PC-3 (cell line): ENCODE measurements at regions of chr7 and their contacts with region 1.

Region 1: GRCh38 chr7:6323967-6324701 is 51.7 kb upstream of the CYTH3 start:
- DNase-seq: no peak
- ATAC-seq: no peak
- H3K4me3 ChIP-seq: no peak overlapping the region
- H3K27ac ChIP-seq: no peak overlapping the region
- H3K4me1 ChIP-seq: no peaks in the 10 kb centered on the region
- H3K27me3 ChIP-seq: no peaks in the 10 kb centered on the region
- CTCF ChIP-seq: no peak

Region 2: GRCh38 chr7:5997222-5997808 is 326.8 kb before region 1 on chr7:
- CTCF ChIA-PET with region 1: no interaction called
- POLR2A ChIA-PET with region 1: no interaction called
- intact Hi-C with region 1: loop called (anchors 1 kb)
- DNase-seq: peak; percentile 72
- ATAC-seq: peak; percentile 69
- H3K4me3 ChIP-seq: no peak overlapping the region
- H3K27ac ChIP-seq: no peak overlapping the region
- H3K4me1 ChIP-seq: peaks cover 13% of the 10 kb centered on the region
- H3K27me3 ChIP-seq: no peaks in the 10 kb centered on the region
- CTCF ChIP-seq: peak; percentile 81

Region 3: GRCh38 chr7:6160191-6160623 is 163.9 kb before region 1 on chr7:
- CTCF ChIA-PET with region 1: interaction called, 6 read pairs
- POLR2A ChIA-PET with region 1: no interaction called
- intact Hi-C with region 1: loop called (anchors 1 kb)
- DNase-seq: peak; percentile 42
- ATAC-seq: peak; percentile 78
- H3K4me3 ChIP-seq: no peak overlapping the region
- H3K27ac ChIP-seq: no peak overlapping the region
- H3K4me1 ChIP-seq: no peaks in the 10 kb centered on the region
- H3K27me3 ChIP-seq: no peaks in the 10 kb centered on the region
- CTCF ChIP-seq: peak; percentile 69

Region 4: GRCh38 chr7:6181136-6181535 is 143.0 kb before region 1 on chr7:
- CTCF ChIA-PET with region 1: no interaction called
- POLR2A ChIA-PET with region 1: no interaction called
- intact Hi-C with region 1: loop called (anchors 5 kb)
- DNase-seq: no peak
- ATAC-seq: no peak
- H3K4me3 ChIP-seq: no peak overlapping the region
- H3K27ac ChIP-seq: no peak overlapping the region
- H3K4me1 ChIP-seq: peaks cover 8% of the 10 kb centered on the region
- H3K27me3 ChIP-seq: no peaks in the 10 kb centered on the region
- CTCF ChIP-seq: no peak

Region 5: DNA sequence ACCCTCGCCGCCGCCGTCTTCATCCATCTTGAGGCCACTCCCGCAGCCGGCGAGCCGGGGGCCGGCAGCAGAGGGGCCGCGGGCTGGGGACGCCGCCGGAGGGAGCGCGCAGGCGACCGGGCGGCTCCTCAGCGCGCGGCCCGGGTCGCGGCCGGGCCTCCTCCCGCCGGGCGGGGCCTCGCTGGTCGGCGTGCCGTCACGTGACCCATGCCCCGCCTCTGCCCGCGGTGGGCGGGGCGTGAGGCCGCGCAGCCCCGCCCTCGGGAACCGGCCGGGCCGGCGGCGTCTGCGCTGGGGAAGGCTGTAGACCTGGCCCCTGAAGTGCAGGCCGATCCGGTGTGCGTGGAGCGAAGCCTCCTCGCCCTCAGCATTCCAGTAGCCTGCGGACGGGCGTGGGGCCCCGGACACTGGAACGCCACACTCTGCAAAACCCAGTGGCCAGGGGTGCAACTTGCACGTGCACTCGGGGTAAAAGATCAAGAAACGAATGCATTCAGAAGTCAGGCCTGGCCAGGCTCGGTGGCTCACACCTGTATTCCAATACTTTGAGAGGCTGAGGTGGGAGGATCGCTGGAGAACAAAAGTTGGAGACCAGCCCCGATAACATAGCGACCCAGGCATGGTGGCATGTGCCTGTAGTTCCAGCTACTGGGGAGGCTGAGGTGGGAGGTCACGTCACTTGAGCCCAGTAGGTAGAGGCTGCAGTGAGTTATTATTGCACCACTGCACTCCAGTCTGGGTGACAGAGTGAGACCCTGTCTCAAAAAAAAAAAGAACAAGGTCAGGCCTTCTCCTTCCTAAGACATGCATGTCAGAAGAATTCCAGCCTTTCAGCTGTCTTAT is 51.4 kb before region 1 on chr7 and contains the start of gene CYTH3:
- CTCF ChIA-PET with region 1: no interaction called
- POLR2A ChIA-PET with region 1: no interaction called
- intact Hi-C with region 1: loop called (anchors 1 kb)
- DNase-seq: peak; percentile 92
- ATAC-seq: peak; percentile 79
- H3K4me3 ChIP-seq: peak within 1 kb of the TSS; percentile 93
- H3K27ac ChIP-seq: no peak within 1 kb of the TSS
- H3K4me1 ChIP-seq: peaks cover 27% of the 10 kb centered on the region
- H3K27me3 ChIP-seq: no peaks in the 10 kb centered on the region
- CTCF ChIP-seq: no peak
- total RNA-seq, gene CYTH3: 23.1 and 34.4 TPM in 2 replicates

Region 6: DNA sequence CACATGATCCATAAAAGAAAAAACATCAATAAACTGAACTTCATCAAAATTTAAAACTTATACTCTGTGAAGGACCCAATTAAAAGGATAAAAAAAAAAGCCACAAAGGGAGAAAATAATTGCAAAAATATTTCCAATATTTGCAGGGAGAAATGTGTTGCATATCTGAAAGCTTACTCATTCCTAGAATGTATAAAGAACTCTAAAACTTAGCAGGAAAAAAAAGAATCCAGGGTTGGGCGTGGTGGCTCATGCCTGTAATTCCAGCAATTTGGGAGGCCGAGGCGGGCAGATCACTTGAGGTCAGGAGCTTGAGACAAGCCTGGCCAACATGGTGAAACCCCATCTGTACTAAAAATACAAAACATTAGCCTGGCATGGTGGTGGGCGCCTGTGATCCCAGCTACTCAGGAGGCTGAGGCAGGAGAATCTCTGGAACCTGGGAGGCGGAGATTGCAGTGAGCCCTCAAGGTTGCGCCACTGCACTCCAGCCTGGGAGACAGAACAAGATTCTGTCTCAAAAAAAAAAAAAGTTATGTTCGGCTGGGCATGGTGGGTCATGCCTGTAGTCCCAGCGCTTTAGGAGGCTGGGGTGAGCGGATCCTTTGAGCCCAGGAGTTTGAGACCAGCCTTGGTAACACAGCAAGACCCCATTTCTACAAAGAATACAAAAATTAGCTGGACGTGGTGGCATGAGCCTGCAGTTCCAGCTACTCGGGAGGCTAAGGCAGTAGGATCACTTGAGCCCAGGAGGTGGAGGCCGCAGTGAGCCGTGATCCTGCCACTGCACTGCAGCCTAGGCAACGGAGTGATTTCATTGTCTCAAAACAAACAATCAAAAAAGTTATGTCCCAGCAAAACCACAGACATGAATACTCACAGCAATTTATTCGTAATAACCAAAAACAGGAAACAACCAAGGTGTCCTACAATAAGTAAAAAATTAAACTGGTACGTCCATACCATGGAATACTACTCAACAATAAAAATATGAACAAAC is 40.4 kb before region 1 on chr7:
- CTCF ChIA-PET with region 1: no interaction called
- POLR2A ChIA-PET with region 1: interaction called, 12 read pairs
- intact Hi-C with region 1: loop called (anchors 2 kb)
- DNase-seq: peak; percentile 87
- ATAC-seq: peak; percentile 69
- H3K4me3 ChIP-seq: peak overlapping the region; percentile 44; the same call in 1 of the 2 replicates
- H3K27ac ChIP-seq: peak overlapping the region; percentile 100
- H3K4me1 ChIP-seq: peaks cover 35% of the 10 kb centered on the region
- H3K27me3 ChIP-seq: no peaks in the 10 kb centered on the region
- CTCF ChIP-seq: no peak